PC-3 (cell line): ENCODE measurements at regions of chr17 and their contacts with region 1.

Region 1: DNA sequence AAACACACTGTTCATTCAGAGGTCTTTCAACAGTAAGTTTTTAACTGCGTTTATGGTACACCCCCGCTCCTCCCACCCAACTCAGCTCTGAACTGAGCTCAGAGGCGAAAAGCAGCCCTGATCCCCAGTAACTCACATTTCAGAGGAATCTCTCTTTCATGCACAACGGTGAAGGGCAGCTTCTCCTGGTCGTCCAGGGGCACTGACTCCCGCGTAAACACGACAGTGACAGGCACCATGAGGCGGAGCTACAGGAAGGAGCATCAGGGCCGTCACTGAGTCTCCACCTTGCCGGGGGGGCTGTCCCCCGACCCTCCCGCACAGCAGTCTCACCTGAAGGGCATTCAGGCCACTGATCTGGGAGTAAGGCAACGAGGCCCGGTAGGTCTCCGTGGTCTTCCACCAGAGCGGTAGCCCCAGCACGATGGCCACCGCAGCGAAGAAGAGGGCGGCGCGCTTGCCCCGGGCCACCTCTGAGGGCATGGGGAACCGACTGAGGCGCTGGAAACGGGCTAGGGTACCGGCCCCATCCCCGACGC is 539 bp downstream of the PIGS start:
- DNase-seq: peak; percentile 20
- ATAC-seq: peak; percentile 43
- H3K4me3 ChIP-seq: peak overlapping the region; percentile 98
- H3K27ac ChIP-seq: no peak overlapping the region
- H3K4me1 ChIP-seq: peaks cover 15% of the 10 kb centered on the region
- H3K27me3 ChIP-seq: no peaks in the 10 kb centered on the region
- CTCF ChIP-seq: no peak

Region 2: GRCh38 chr17:27929990-27930389 is 640.8 kb before region 1 on chr17:
- CTCF ChIA-PET with region 1: no interaction called
- POLR2A ChIA-PET with region 1: no interaction called
- intact Hi-C with region 1: no loop called
- DNase-seq: no peak
- ATAC-seq: no peak
- H3K4me3 ChIP-seq: no peak overlapping the region
- H3K27ac ChIP-seq: no peak overlapping the region
- H3K4me1 ChIP-seq: no peaks in the 10 kb centered on the region
- H3K27me3 ChIP-seq: no peaks in the 10 kb centered on the region
- CTCF ChIP-seq: no peak

Region 3: GRCh38 chr17:28553000-28553505 is 17.7 kb before region 1 on chr17:
- CTCF ChIA-PET with region 1: no interaction called
- POLR2A ChIA-PET with region 1: interaction called, 13 read pairs
- intact Hi-C with region 1: no loop called
- DNase-seq: no peak
- ATAC-seq: no peak
- H3K4me3 ChIP-seq: peak overlapping the region; percentile 83; the same call in 1 of the 2 replicates
- H3K27ac ChIP-seq: no peak overlapping the region
- H3K4me1 ChIP-seq: 0 out of 2 replicates have a peak, but pooled peaks cover 8% of the 10 kb centered on the region
- H3K27me3 ChIP-seq: no peaks in the 10 kb centered on the region
- CTCF ChIP-seq: no peak

Region 4: GRCh38 chr17:28865946-28866752 is 295.4 kb after region 1 on chr17:
- CTCF ChIA-PET with region 1: no interaction called
- POLR2A ChIA-PET with region 1: no interaction called
- intact Hi-C with region 1: no loop called
- DNase-seq: no peak
- ATAC-seq: peak; percentile 49
- H3K4me3 ChIP-seq: no peak overlapping the region
- H3K27ac ChIP-seq: no peak overlapping the region
- H3K4me1 ChIP-seq: peaks cover 4% of the 10 kb centered on the region; the same call in 1 of the 2 replicates
- H3K27me3 ChIP-seq: no peaks in the 10 kb centered on the region
- CTCF ChIP-seq: no peak